ENCODE measurements at regions of chr7 and their contacts with region 1.

Region 1: GRCh38 chr7:332646-333392 is 42.8 kb downstream of the FOXL3 start:
- DNase-seq: peak; percentile 68 to 80
- H3K4me3 ChIP-seq: peak overlapping the region; percentile 23 to 71 (median 47)
- H3K27ac ChIP-seq: peak overlapping the region; percentile 83 to 87
- H3K4me1 ChIP-seq: no peaks in the 10 kb centered on the region
- H3K27me3 ChIP-seq: no peaks in the 10 kb centered on the region
- CTCF ChIP-seq: peak; percentile 67 to 86 (median 84)
- POLR2A ChIP-seq: no peak

Region 2: DNA sequence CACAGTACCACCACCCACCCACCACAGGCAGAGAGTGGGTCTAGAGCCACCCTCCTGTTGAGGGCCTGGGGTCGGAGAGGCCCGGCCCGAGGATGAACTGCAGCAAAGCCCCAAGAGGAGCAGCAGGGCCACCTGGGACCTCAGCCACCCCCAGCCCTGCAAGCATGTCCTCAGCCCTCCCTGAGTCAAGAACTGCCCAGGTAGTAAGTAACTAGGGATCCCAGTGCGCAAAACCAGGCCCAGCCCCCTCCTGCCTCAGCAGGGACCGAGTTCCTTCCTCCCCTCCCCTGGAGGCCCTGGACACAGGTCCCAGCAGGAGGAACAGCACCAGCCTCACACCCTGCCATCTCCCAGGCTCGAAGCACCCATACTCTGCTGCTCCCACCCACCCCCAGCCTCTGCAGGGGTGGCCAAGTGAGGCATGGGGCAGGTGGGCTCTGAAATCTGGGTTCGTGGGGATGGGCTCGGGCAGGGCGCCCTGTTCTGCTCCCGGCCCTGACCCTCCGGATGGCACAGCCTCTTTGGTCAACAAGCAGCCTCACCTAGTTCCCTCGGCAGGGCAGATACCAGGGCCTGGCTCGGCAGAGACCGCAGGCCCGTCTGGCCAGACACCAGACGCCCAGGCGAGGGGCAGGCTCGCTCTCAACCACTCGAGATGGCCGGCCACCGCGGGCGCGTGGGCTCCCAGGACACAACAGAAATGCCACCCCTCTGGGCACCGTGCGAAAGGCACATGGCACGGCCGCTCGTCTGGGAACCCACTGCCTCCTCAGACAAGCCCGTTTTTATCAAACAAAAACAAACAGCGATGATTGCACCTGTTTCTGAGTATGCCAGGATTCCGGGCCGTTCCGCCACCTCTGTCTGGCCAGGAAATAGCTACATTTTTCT is 171.6 kb after region 1 on chr7:
- intact Hi-C with region 1: loop called (anchors 5 kb)
- DNase-seq: no peak
- H3K4me3 ChIP-seq: no peak overlapping the region
- H3K27ac ChIP-seq: peak overlapping the region; percentile 30 to 54
- H3K4me1 ChIP-seq: no peaks in the 10 kb centered on the region
- H3K27me3 ChIP-seq: no peaks in the 10 kb centered on the region
- CTCF ChIP-seq: no peak
- POLR2A ChIP-seq: no peak

Region 3: GRCh38 chr7:519484-520390 is 186.9 kb after region 1 on chr7 and contains the start of gene PDGFA:
- intact Hi-C with region 1: loop called (anchors 5 kb)
- DNase-seq: no peak
- H3K4me3 ChIP-seq: peak within 1 kb of the TSS; percentile 66 to 92 (median 76)
- H3K27ac ChIP-seq: peak within 1 kb of the TSS; percentile 87 to 90
- H3K4me1 ChIP-seq: peaks cover 6 to 9% of the 10 kb centered on the region in 2 donors
- H3K27me3 ChIP-seq: peaks cover 0 to 32% of the 10 kb centered on the region in 2 donors
- CTCF ChIP-seq: no peak
- POLR2A ChIP-seq: no peak
- total RNA-seq, gene PDGFA: 19.8 to 33.4 (median 31.2) TPM

Measured in breast epithelium (tissue), 4 donors.